Natural killer cell (primary cell): ENCODE measurements at regions of chr2 and their contacts with region 1.

Region 1: GRCh38 chr2:65300761-65301711 is 73.4 kb downstream of the ACTR2 start:
- DNase-seq: peak; percentile 51 to 77
- ATAC-seq: peak; percentile 81 to 87 (median 86)
- H3K4me3 ChIP-seq: peak overlapping the region; percentile 11
- H3K4me3 Mint-ChIP-seq: peak overlapping the region; percentile 91
- H3K27ac ChIP-seq: peak overlapping the region; percentile 14
- H3K27ac Mint-ChIP-seq: peak overlapping the region; percentile 74 to 79
- H3K4me1 ChIP-seq: peaks cover 38% of the 10 kb centered on the region
- H3K4me1 Mint-ChIP-seq: peaks cover 45 to 51% of the 10 kb centered on the region in 2 donors
- H3K27me3 ChIP-seq: peaks cover 25% of the 10 kb centered on the region
- H3K27me3 Mint-ChIP-seq: peaks cover 43 to 45% of the 10 kb centered on the region in 2 donors
- CTCF ChIP-seq: no peak

Region 2: GRCh38 chr2:65350684-65351083 is 49.6 kb after region 1 on chr2:
- intact Hi-C with region 1: loop called (anchors 5 kb)
- DNase-seq: peak in 1 of 2 donors; percentile 19
- ATAC-seq: no peak
- H3K4me3 ChIP-seq: no peak overlapping the region
- H3K4me3 Mint-ChIP-seq: no peak overlapping the region
- H3K27ac ChIP-seq: no peak overlapping the region
- H3K27ac Mint-ChIP-seq: peak overlapping the region in 1 of 2 donors; percentile 64
- H3K4me1 ChIP-seq: peaks cover 10% of the 10 kb centered on the region
- H3K4me1 Mint-ChIP-seq: peaks cover 15 to 45% of the 10 kb centered on the region in 2 donors
- H3K27me3 ChIP-seq: no peaks in the 10 kb centered on the region
- H3K27me3 Mint-ChIP-seq: peaks cover 0 to 13% of the 10 kb centered on the region in 2 donors
- CTCF ChIP-seq: no peak

Region 3: GRCh38 chr2:65436169-65436823 is 135.3 kb after region 1 on chr2:
- intact Hi-C with region 1: loop called (anchors 5 kb)
- DNase-seq: peak; percentile 50 to 57
- ATAC-seq: peak; percentile 59 to 83 (median 69)
- H3K4me3 ChIP-seq: peak overlapping the region; percentile 60
- H3K4me3 Mint-ChIP-seq: peak overlapping the region; percentile 98
- H3K27ac ChIP-seq: no peak overlapping the region
- H3K27ac Mint-ChIP-seq: peak overlapping the region; percentile 82 to 89
- H3K4me1 ChIP-seq: peaks cover 30% of the 10 kb centered on the region
- H3K4me1 Mint-ChIP-seq: peaks cover 17 to 31% of the 10 kb centered on the region in 2 donors
- H3K27me3 ChIP-seq: peaks cover 13% of the 10 kb centered on the region
- H3K27me3 Mint-ChIP-seq: peaks cover 0 to 10% of the 10 kb centered on the region in 2 donors
- CTCF ChIP-seq: no peak